ENCODE measurements at regions of chr2 and their contacts with region 1.

Region 1: GRCh38 chr2:63841254-63842022 is at the start of gene UGP2:
- DNase-seq: peak; percentile 92 to 98 (median 96)
- H3K4me3 ChIP-seq: peak within 1 kb of the TSS; percentile 76 to 97 (median 96)
- H3K27ac ChIP-seq: peak within 1 kb of the TSS; percentile 79 to 93
- H3K4me1 ChIP-seq: peaks cover 26 to 46% (median 27%) of the 10 kb centered on the region in 4 experiments
- H3K27me3 ChIP-seq: no peaks in the 10 kb centered on the region

Region 2: GRCh38 chr2:63270717-63271116 is 570.7 kb before region 1 on chr2:
- CTCF ChIA-PET with region 1: no interaction called
- POLR2A ChIA-PET with region 1: no interaction called
- DNase-seq: no peak
- H3K4me3 ChIP-seq: no peak overlapping the region
- H3K27ac ChIP-seq: no peak overlapping the region
- H3K4me1 ChIP-seq: no peaks in the 10 kb centered on the region
- H3K27me3 ChIP-seq: no peaks in the 10 kb centered on the region

Region 3: DNA sequence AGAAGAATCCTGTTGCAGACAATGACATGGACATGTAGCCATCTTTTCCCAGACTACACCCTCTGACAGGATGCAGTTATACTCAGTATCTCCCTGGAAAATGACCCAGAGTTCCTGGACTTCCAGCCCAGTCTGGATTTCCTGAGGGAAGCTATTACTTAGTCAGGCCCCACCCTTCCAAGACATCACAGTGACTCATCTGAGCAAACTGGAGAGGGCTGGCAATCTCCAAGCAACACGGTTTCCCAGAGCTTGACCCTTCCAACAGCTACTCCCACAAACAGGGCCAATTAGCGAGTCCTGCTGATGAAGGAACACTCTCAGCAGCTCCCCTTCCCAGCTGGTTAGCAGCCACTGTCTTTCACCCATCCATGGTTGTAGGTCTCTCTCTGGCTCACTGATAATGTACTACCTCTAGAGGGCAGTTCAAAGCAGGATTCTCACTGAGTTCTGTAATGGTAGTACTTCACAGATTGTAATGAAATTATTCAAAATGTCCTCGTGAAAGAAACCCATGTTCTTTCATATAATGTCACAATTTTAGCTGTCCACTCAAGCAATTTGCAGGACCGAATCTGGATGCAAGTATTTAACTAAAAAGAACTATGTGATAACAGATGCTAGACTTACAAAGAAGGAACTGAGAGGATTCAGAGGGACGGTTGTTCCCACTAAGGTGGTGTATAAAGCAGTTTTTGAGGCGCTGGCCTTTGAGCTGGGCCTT is 142.5 kb before region 1 on chr2:
- CTCF ChIA-PET with region 1: interaction called, 12 read pairs
- POLR2A ChIA-PET with region 1: interaction called, 3 read pairs
- DNase-seq: peak; percentile 26 to 51 (median 41)
- H3K4me3 ChIP-seq: no peak overlapping the region
- H3K27ac ChIP-seq: no peak overlapping the region
- H3K4me1 ChIP-seq: no peaks in the 10 kb centered on the region
- H3K27me3 ChIP-seq: no peaks in the 10 kb centered on the region

Region 4: GRCh38 chr2:64192125-64192479 is 350.7 kb after region 1 on chr2:
- CTCF ChIA-PET with region 1: no interaction called
- POLR2A ChIA-PET with region 1: no interaction called
- DNase-seq: peak in 2 of 3 donors; percentile 52 to 55
- H3K4me3 ChIP-seq: peak overlapping the region in 2 of 7 experiments; percentile 13 to 43
- H3K27ac ChIP-seq: no peak overlapping the region
- H3K4me1 ChIP-seq: peaks cover 0 to 14% (median 6%) of the 10 kb centered on the region in 4 experiments
- H3K27me3 ChIP-seq: no peaks in the 10 kb centered on the region